Uterus (tissue), 4 donors: ENCODE measurements at regions of chr11 and their contacts with region 1.

Region 1: DNA sequence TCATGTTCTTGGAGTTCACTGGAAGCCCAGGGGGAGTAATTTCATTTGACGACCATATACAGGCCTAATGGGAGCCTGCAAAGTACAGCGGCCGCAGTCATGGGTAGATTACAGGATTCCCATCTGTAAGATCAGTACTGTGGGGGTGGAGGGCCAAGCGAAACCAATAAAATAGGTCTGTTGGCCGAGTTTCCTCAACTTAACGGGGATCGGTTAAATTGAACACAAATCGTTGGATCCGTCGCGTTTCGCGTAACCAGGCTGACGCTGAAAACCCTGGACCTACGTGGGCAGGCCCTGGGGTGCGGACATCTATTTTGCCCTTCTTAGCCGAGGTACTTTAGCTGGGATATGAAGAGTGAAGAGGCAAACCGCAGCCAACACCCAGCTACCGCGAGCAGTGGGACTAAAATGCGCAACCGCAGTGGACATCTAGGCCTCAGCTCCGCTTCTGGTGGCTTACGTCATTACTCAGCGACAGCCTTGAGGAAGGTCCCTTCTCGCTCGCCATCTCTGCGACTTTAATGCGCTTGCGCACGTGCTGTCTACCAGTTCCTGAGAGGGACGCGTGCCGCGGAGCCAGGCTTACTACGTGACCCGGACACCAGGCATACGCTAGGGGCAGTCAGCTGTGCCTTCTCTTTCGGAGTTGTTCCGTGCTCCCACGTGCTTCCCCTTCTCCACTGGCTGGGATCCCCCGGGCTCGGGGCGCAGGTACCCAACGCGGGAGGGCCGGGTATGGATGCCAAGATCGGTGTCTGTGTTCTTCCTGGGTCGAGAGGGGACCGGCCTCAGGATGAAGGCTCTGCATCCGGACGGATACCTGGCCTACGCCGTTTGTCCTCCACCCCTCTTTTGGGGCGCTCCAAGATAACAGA is at the start of gene NAT10:
- DNase-seq: peak; percentile 97 to 98
- H3K4me3 ChIP-seq: peak within 1 kb of the TSS; percentile 66 to 90
- H3K27ac ChIP-seq: peak within 1 kb of the TSS; percentile 92 to 97
- H3K4me1 ChIP-seq: peaks cover 4 to 5% of the 10 kb centered on the region in 2 donors
- H3K27me3 ChIP-seq: no peaks in the 10 kb centered on the region
- CTCF ChIP-seq: peak in 3 of 4 experiments; percentile 12 to 30 (median 23)
- POLR2A ChIP-seq: peak; percentile 74 to 83
- total RNA-seq, gene NAT10: 18.5 to 54.0 (median 22.9) TPM

Region 2: DNA sequence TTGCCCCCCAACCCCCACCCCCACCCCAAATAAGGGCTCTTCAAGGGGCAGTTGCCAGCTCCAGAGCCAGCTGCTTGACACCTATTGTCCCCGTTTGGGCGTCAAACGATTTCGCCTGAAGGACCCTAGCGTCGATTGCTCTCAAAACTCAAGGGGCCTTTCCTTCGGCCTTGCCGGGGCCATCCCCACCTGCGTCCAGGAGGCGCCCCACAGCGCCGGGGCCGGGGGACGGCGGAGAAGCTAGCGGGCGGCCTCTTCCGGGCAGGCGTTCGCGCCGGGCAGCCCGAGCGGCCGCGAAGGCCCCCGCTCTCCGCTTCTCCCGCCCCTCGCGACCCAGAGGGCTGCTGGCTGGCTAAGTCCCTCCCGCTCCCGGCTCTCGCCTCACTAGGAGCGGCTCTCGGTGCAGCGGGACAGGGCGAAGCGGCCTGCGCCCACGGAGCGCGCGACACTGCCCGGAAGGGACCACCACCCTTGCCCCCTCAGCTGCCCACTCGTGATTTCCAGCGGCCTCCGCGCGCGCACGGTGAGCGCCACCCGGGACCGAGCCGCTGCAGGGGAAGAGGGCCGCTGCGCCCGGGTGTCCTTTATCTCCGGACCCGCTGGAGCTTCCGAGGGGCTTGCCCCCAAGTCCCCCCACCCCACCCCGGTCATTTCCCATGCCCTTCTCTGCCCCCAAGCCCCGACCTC is 53.8 kb before region 1 on chr11 and contains the start of gene CAPRIN1:
- intact Hi-C with region 1: loop called (anchors 5 kb)
- DNase-seq: peak; percentile 81 to 85
- H3K4me3 ChIP-seq: peak within 1 kb of the TSS; percentile 86 to 87
- H3K27ac ChIP-seq: peak within 1 kb of the TSS; percentile 99
- H3K4me1 ChIP-seq: peaks cover 9 to 21% of the 10 kb centered on the region in 2 donors
- H3K27me3 ChIP-seq: no peaks in the 10 kb centered on the region
- CTCF ChIP-seq: peak in 1 of 4 experiments; percentile 7
- POLR2A ChIP-seq: peak; percentile 27 to 72
- total RNA-seq, gene CAPRIN1: 118 to 252 (median 169) TPM

Region 3: DNA sequence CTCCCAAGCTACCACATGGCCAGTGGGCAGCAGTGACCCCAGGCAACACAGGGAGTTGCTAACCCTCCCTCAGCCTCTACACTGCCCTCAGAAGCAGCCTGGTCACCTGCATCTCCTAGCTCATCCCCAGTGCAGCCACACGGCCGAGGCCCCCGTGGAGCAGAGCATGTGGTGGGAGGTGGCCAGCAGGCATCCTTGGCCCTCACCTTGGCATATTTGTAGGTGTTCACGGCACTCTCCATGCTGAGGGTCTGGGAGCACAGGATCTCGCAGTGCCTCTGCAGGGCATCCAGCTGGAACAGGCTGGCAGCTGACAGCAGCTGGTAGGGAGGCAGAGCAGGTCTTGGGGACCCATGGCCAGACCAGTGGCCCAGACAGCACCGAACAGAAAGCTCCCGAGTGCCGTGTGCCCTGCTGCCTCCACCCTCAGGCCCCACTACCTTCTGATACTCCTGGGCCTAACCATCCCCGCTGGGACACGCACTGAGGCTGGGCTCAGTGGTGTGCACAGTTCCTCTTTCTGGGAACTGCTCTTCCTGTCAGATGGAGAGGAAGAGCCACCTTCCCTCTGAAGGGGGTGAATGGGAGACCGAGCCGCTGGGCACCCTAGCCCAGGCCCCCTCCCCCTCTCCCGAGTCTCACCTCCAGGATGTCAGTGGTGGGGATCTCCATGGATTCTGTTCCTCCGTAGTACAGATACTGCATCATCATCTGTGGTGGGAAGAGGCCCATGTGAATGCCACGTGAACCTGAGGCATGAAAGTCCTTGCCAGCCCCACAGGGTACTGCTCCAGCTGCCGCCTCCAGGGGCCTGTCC is 48.9 kb after region 1 on chr11:
- intact Hi-C with region 1: no loop called
- DNase-seq: no peak
- H3K4me3 ChIP-seq: no peak overlapping the region
- H3K27ac ChIP-seq: peak overlapping the region in 1 of 2 donors; percentile 53
- H3K4me1 ChIP-seq: no peaks in the 10 kb centered on the region
- H3K27me3 ChIP-seq: no peaks in the 10 kb centered on the region
- CTCF ChIP-seq: no peak
- POLR2A ChIP-seq: no peak